ENCODE measurements at regions of chr7 and their contacts with region 1.

Region 1: DNA sequence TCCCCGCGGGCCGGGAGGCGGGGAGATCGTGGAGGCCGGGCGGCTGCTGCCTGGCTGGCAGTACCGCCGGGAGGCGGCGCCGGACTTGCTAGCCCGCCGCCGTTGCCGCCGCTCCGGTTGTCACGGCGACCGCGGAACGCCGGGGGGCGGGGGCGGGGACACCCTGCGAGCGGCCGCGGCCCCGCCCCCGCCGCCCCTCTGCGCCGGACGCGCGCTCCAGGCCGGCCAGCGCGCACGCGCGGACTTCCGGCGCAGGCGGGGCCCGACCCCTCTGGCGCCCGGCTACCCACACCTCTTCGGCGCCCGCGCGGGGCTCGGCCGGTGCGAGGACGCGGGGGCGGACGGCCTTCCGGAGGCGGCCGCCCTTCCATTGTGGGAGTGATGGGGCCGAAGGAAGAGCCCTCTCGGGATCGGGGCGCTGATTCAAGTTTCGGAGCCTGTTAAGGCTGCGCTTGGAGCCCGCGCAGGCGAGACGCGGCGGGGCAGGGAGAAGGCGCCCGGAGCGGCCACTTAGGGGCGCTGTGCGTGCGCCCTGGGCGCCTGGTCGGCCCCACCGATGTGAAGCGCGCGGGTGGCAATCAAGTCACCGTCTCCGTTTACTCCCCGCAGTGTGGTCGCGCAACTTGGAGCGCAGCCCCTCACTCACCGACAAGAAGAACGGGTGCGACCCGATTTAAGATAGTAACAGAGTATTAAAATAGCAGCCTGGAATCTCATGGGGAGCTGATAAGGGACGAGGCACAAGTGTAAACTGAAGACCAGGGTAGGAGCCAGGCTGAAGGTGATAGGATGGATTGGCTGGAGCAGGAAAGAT is 448 bp upstream of the DPY19L1 start:
- DNase-seq: peak; percentile 96
- ATAC-seq: peak; percentile 83
- H3K4me3 Mint-ChIP-seq: peak overlapping the region; percentile 86
- H3K27ac Mint-ChIP-seq: peak overlapping the region; percentile 72
- H3K4me1 Mint-ChIP-seq: peaks cover 29% of the 10 kb centered on the region
- H3K27me3 Mint-ChIP-seq: peaks cover 4% of the 10 kb centered on the region
- CTCF ChIP-seq: no peak

Region 2: DNA sequence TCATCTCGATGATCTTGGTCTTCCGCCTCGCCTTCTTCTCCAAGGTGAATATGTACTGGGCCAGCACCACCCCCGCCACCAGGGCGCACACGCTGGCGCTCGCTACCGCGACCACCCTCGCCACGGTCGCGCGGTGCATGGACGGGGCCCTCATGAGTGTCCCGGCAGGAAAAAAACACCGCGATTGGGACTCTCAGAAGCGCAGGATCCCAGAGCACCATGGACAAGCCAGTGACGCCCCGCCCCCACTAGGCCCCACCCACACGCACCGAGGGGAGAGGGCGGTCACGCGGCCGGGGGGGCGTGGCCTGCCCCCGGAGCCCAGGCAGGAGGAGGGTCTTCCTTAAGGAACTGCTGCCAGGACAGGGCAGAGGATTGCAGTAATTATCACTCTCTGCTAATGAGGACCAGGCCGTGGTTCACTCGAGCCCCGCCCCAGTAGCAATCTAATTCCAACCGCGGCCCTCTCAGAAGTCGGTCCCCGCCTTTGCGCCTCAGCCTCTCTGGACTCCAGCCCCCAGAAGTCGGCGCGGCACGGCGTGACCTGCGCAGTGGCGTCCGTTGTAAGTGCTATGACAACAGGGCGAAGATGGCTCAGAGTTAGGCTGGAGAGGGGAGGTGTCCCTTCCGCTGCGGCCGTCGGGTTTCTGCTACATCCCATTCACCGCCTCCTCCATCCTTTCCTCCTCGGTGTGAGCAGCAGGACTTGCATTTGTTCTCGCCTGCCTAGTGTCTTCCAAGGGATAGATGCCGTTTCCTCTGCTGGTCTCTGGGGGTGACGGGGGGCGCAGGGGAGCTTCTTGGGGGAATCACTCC is 1908.5 kb before region 1 on chr7 and contains the start of gene BBS9:
- CTCF ChIA-PET with region 1: no interaction called
- POLR2A ChIA-PET with region 1: no interaction called
- intact Hi-C with region 1: loop called (anchors 1 kb)
- DNase-seq: peak; percentile 90
- ATAC-seq: peak; percentile 92
- H3K4me3 Mint-ChIP-seq: peak within 1 kb of the TSS; percentile 94
- H3K27ac Mint-ChIP-seq: peak within 1 kb of the TSS; percentile 92
- H3K4me1 Mint-ChIP-seq: peaks cover 18% of the 10 kb centered on the region
- H3K27me3 Mint-ChIP-seq: no peaks in the 10 kb centered on the region
- CTCF ChIP-seq: no peak
- total RNA-seq, gene BBS9: 18.3 and 18.6 TPM in 2 replicates

Region 3: GRCh38 chr7:35253710-35254495 is 216.2 kb after region 1 on chr7 and contains the start of gene TBX20:
- CTCF ChIA-PET with region 1: no interaction called
- POLR2A ChIA-PET with region 1: no interaction called
- intact Hi-C with region 1: loop called (anchors 5 kb)
- DNase-seq: no peak
- ATAC-seq: peak; percentile 75
- H3K4me3 Mint-ChIP-seq: peak within 1 kb of the TSS; percentile 70
- H3K27ac Mint-ChIP-seq: no peak within 1 kb of the TSS
- H3K4me1 Mint-ChIP-seq: peaks cover 16% of the 10 kb centered on the region
- H3K27me3 Mint-ChIP-seq: peaks cover 78% of the 10 kb centered on the region
- CTCF ChIP-seq: no peak
- total RNA-seq, gene TBX20: 0.10 and 0.11 TPM in 2 replicates

Region 4: GRCh38 chr7:35729061-35729783 is 691.5 kb after region 1 on chr7:
- CTCF ChIA-PET with region 1: no interaction called
- POLR2A ChIA-PET with region 1: no interaction called
- intact Hi-C with region 1: loop called (anchors 2 kb)
- DNase-seq: peak; percentile 53
- ATAC-seq: peak; percentile 81
- H3K4me3 Mint-ChIP-seq: peak overlapping the region; percentile 70
- H3K27ac Mint-ChIP-seq: peak overlapping the region; percentile 93
- H3K4me1 Mint-ChIP-seq: peaks cover 93% of the 10 kb centered on the region
- H3K27me3 Mint-ChIP-seq: no peaks in the 10 kb centered on the region
- CTCF ChIP-seq: no peak

Region 5: GRCh38 chr7:36366718-36367560 is 1329.2 kb after region 1 on chr7:
- CTCF ChIA-PET with region 1: no interaction called
- POLR2A ChIA-PET with region 1: no interaction called
- intact Hi-C with region 1: loop called (anchors 1 kb)
- DNase-seq: peak; percentile 93
- ATAC-seq: peak; percentile 98
- H3K4me3 Mint-ChIP-seq: peak overlapping the region; percentile 92
- H3K27ac Mint-ChIP-seq: peak overlapping the region; percentile 30
- H3K4me1 Mint-ChIP-seq: peaks cover 5% of the 10 kb centered on the region
- H3K27me3 Mint-ChIP-seq: peaks cover 6% of the 10 kb centered on the region
- CTCF ChIP-seq: no peak

Measured in activated B cell treated with CpG ODN at 0.5 μM for 24 hours (primary cell).